Dorsolateral prefrontal cortex (tissue), 120 donors: ENCODE measurements at regions of chr9 and their contacts with region 1.

Region 1: DNA sequence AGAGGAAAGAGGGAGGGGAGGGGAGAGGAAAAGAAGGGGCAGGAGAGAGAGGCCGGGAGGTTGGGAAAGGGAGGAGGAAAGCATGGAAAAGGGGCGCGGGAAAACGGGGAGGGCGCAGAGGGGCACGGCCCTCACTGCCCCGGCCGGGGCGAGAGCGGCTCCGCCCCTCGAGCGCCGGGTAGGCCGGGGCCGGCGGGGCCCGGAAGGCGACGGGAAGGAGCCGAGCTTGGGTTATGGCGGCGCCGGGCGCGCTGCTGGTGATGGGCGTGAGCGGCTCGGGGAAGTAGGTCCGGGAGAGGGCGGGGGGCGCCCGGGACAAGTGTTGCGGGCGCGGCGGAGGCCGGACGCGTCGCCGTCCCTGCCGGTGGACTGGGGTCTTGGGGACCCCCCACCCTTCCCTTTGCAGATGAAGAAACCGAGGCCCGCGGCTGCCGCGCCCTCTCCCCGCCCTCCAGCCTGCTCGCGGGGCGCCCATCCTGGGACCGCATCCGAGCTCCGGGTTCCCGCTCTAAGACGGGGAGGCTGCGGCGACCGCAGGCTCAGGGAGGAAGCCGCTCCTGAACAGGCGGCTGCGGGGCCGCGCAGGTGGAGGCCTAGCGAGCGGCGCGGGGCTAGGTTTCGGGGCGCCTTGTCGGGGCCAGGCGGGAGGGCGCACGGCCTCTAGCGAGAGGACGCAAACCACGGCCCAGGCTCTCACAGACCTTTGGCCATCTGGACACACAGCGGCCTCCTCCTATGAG is at the start of gene IDNK:
- DNase-seq: peak; percentile 28 to 75 (median 55)
- H3K4me3 ChIP-seq: peak within 1 kb of the TSS; percentile 52 to 97 (median 89)
- H3K27ac ChIP-seq: peak within 1 kb of the TSS; percentile 72 to 99 (median 96)
- H3K27me3 ChIP-seq: no peaks in the 10 kb centered on the region
- CTCF ChIP-seq: peak in 10 of 56 donors; percentile 4 to 41 (median 13)
- total RNA-seq, gene IDNK: 3.8 to 21.4 (median 11.5) TPM

Region 2: DNA sequence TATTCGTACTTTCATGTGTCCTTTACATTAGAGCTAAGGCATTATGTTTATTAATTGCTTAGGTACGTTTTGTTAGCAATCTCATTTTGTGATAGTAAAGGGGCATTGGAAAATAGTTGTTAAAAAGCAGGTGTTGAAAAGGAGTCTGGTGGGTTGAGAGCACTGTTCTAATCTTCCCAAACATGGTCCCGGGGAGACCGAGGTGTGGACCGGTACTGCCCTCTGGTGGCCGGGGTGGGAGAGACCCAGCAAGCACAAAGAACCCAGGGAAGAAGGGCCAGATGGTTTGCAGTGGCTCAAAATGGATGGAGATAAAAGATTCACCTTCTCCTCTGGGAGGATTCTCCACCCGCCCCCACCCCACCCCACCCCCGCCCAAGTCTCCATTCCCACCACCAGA is 26.0 kb after region 1 on chr9:
- intact Hi-C with region 1: loop called in 1 of 2 experiments (anchors 2 kb)
- DNase-seq: peak in 9 of 10 donors; percentile 12 to 74 (median 61)
- H3K4me3 ChIP-seq: no peak overlapping the region
- H3K27ac ChIP-seq: no peak overlapping the region
- H3K27me3 ChIP-seq: no peaks in the 10 kb centered on the region
- CTCF ChIP-seq: peak; percentile 13 to 82 (median 72)

Region 3: GRCh38 chr9:83707768-83708514 is 84.8 kb after region 1 on chr9 and contains the start of gene UBQLN1:
- intact Hi-C with region 1: loop called (anchors 1 to 5 kb)
- DNase-seq: peak; percentile 84 to 91 (median 89)
- H3K4me3 ChIP-seq: peak within 1 kb of the TSS; percentile 68 to 100 (median 98)
- H3K27ac ChIP-seq: peak within 1 kb of the TSS; percentile 94 to 100 (median 100)
- H3K27me3 ChIP-seq: no peaks in the 10 kb centered on the region
- CTCF ChIP-seq: peak in 18 of 56 donors; percentile 3 to 42 (median 18)
- total RNA-seq, gene UBQLN1: 109 to 237 (median 183) TPM